ENCODE measurements at regions of chr1 and their contacts with region 1.

Region 1: GRCh38 chr1:225474986-225475820 is 47.4 kb upstream of the LBR start:
- DNase-seq: peak; percentile 92
- H3K4me3 ChIP-seq: peak overlapping the region; percentile 15 to 43 (median 19)
- H3K27ac ChIP-seq: no peak overlapping the region
- H3K4me1 ChIP-seq: peaks cover 4 to 34% (median 26%) of the 10 kb centered on the region in 4 donors
- H3K27me3 ChIP-seq: no peaks in the 10 kb centered on the region
- CTCF ChIP-seq: peak in 2 of 3 experiments; percentile 100
- EP300 ChIP-seq: no peak
- POLR2A ChIP-seq: no peak

Region 2: DNA sequence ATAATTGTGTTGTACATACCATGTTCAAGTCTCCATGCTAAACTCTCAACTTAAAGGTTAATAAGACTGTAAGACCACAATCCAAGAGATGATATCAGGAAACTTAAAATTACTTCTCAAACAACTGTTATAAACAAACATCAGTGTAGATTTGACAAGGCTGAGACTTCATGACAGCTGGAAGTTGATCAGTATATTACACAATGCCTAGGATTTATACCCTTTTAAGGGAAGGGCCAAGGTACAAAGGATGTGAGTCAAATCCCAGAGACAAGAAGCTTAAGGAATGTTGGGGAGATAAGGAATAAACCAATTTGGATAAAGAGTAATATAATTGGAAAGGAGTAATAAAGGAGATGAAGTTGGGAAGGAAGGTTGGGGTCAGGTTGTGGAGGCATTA is 146.2 kb before region 1 on chr1:
- intact Hi-C with region 1: no loop called
- DNase-seq: no peak
- H3K4me3 ChIP-seq: no peak overlapping the region
- H3K27ac ChIP-seq: no peak overlapping the region
- H3K4me1 ChIP-seq: no peaks in the 10 kb centered on the region
- H3K27me3 ChIP-seq: no peaks in the 10 kb centered on the region
- CTCF ChIP-seq: no peak
- EP300 ChIP-seq: no peak
- POLR2A ChIP-seq: no peak

Region 3: GRCh38 chr1:225426395-225427234 is 48.6 kb before region 1 on chr1:
- intact Hi-C with region 1: no loop called
- DNase-seq: no peak
- H3K4me3 ChIP-seq: peak overlapping the region; percentile 83 to 98 (median 94)
- H3K27ac ChIP-seq: peak overlapping the region; percentile 93 to 98 (median 96)
- H3K4me1 ChIP-seq: peaks cover 30 to 62% (median 56%) of the 10 kb centered on the region in 4 donors
- H3K27me3 ChIP-seq: no peaks in the 10 kb centered on the region
- CTCF ChIP-seq: no peak
- EP300 ChIP-seq: no peak
- POLR2A ChIP-seq: peak; percentile 3

Region 4: DNA sequence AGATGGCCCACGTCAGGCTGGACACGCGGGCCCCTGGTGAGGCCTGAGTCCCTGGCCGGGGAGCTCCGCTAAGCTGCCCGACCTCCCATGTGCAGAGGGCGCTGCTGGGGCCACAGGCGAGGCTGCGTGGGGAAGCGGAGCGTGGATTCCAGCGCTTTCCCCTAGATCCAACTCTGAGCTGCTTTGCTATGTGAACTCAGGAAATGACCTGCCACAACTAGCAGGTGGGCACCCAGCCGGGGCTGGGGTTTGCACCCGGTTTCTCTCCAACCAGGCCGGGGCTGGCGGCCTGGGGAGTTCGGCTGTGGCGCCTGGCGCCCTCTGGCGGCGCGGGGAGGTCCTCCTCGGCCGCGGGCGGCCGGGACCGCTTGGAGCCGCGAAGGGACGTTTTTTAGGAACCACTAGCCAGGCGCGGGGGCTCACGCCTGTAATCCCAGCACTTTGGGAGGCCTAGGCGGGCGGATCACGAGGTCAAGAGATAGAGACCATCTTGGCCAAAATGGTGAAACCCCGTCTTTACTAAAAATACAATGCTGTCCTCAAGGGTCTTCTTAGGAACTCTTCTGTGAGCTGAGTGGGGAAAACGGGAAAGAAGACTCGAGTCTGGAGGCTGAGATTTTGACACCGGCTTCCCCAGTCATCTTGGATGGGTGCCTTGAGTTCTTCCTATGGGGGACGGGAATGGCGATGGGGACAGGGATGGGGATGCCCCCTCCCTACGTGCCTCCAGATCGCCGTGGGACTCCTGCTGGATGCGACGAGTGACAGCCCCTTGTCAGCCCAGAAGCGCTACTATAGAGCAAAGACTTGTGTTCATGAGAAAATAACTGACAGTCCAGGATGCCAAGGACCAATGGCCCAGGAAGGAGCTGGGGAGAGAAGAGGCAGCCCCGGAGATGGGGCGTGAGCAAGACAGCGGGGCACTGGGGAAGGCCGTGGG is 436.3 kb after region 1 on chr1:
- intact Hi-C with region 1: loop called (anchors 1 kb)
- DNase-seq: no peak
- H3K4me3 ChIP-seq: peak overlapping the region; percentile 5 to 21 (median 11)
- H3K27ac ChIP-seq: no peak overlapping the region
- H3K4me1 ChIP-seq: peaks cover 0 to 13% (median 10%) of the 10 kb centered on the region in 4 donors
- H3K27me3 ChIP-seq: no peaks in the 10 kb centered on the region
- CTCF ChIP-seq: peak; percentile 91 to 98 (median 91)
- EP300 ChIP-seq: no peak
- POLR2A ChIP-seq: no peak

Measured in esophagus muscularis mucosa (tissue), 4 donors.